ENCODE measurements at regions of chr6 and their contacts with region 1.

Region 1: DNA sequence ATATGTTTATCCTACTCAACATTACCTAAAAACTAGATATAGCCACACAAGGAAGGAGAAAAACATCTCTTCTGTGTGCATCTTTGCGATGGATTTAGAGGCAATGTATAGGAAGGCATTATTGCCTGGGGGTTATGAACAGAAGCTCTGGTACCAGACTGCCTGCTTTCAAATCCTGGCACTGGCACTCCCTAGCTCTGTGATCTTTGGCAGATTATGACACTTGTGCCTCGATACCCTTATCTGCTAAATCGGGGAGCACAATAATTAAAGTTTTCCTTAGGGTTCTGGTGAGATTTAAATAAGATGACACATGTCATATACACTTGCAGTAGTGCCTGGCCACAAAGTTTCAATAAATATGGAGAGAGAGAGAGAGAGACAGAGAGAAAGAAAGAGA is 53.3 kb downstream of the SYNE1 start:
- DNase-seq: no peak
- ATAC-seq: no peak
- H3K4me3 ChIP-seq: no peak overlapping the region
- H3K27ac ChIP-seq: no peak overlapping the region
- H3K4me1 ChIP-seq: no peaks in the 10 kb centered on the region
- H3K27me3 ChIP-seq: no peaks in the 10 kb centered on the region
- CTCF ChIP-seq: no peak
- POLR2A ChIP-seq: no peak
- RAD21 ChIP-seq: no peak

Region 2: GRCh38 chr6:152625213-152625612 is 41.3 kb after region 1 on chr6:
- CTCF ChIA-PET with region 1: no interaction called
- POLR2A ChIA-PET with region 1: no interaction called
- dilution Hi-C with region 1: no loop called
- in situ Hi-C with region 1: no loop called
- intact Hi-C with region 1: loop called (anchors 5 kb)
- DNase-seq: no peak
- ATAC-seq: no peak
- H3K4me3 ChIP-seq: no peak overlapping the region
- H3K27ac ChIP-seq: no peak overlapping the region
- H3K4me1 ChIP-seq: no peaks in the 10 kb centered on the region
- H3K27me3 ChIP-seq: no peaks in the 10 kb centered on the region
- CTCF ChIP-seq: no peak
- POLR2A ChIP-seq: no peak
- RAD21 ChIP-seq: no peak

Region 3: GRCh38 chr6:153023977-153024708 is 440.3 kb after region 1 on chr6:
- CTCF ChIA-PET with region 1: no interaction called
- POLR2A ChIA-PET with region 1: no interaction called
- dilution Hi-C with region 1: no loop called
- in situ Hi-C with region 1: no loop called
- intact Hi-C with region 1: no loop called
- DNase-seq: peak; percentile 56
- ATAC-seq: peak; percentile 83
- H3K4me3 ChIP-seq: no peak overlapping the region
- H3K27ac ChIP-seq: no peak overlapping the region
- H3K4me1 ChIP-seq: 0 out of 2 replicates have a peak, but pooled peaks cover 2% of the 10 kb centered on the region
- H3K27me3 ChIP-seq: no peaks in the 10 kb centered on the region
- CTCF ChIP-seq: peak; percentile 69
- POLR2A ChIP-seq: no peak
- RAD21 ChIP-seq: peak; percentile 60

Measured in IMR-90 (cell line).